Heart right ventricle (tissue), 16 donors: ENCODE measurements at regions of chr12 and their contacts with region 1.

Region 1: DNA sequence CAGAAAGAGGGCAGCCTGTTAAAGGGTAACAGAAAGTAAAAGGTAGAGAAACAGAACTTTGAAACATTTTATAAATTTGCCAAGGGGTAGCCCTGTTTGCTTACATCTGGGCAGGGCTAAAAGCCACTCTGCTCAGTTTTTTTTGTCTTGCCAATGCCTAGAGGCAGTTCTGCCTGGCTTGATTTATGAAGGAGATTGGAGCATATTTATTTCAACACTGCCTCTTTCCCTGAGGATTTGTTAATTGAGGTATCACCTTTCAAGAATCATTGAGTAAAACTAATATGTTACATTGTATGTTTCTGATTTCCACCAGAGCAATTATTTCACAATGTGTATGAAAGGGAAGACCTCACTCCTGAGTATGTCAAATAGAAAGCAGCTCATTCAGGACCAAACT is 160.8 kb downstream of the GXYLT1 start:
- DNase-seq: no peak
- ATAC-seq: no peak
- H3K4me3 ChIP-seq: no peak overlapping the region
- H3K27ac ChIP-seq: no peak overlapping the region
- H3K4me1 ChIP-seq: no peaks in the 10 kb centered on the region
- H3K27me3 ChIP-seq: peaks cover 0 to 3% (median 0%) of the 10 kb centered on the region in 7 donors
- CTCF ChIP-seq: no peak

Region 2: DNA sequence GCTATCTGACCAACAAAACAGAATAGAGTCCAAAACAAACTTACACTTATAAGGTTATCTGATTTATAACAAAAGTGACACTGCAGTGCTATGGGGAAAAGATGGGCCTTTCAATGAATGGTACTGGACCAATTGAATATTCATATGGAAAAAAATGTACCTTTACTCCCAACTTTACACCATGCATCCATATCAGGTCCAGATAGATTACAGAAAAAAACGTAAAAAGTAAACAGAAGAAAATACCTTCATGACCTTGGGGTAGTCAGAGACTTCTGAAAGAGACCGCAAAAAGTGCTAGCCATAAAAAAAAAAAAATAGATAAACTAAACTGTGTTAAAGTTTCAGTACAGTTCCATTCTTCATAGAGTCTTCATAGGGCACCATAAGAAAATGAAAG is 147.4 kb before region 1 on chr12:
- intact Hi-C with region 1: no loop called
- DNase-seq: no peak
- ATAC-seq: no peak
- H3K4me3 ChIP-seq: no peak overlapping the region
- H3K27ac ChIP-seq: no peak overlapping the region
- H3K4me1 ChIP-seq: no peaks in the 10 kb centered on the region
- H3K27me3 ChIP-seq: no peaks in the 10 kb centered on the region
- CTCF ChIP-seq: no peak

Region 3: DNA sequence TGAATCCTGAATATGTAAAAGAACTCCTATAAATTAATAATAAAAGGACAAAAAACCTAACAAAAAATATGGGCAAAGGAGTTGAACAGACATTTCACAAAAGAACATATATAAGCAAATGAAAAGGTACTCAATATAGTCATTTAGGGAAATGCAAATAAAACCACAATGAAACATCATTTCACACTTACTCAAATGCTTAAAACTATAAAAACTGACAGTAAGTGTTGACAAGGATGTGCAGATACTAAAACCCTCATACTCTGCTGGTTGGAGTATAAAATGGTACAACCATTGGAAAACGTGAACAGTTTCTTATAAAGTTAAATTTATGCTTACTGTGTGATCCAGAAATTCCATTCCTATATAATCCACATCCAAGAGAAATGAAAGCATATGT is 86.3 kb before region 1 on chr12:
- intact Hi-C with region 1: no loop called
- DNase-seq: no peak
- ATAC-seq: no peak
- H3K4me3 ChIP-seq: no peak overlapping the region
- H3K27ac ChIP-seq: no peak overlapping the region
- H3K4me1 ChIP-seq: peaks cover 0 to 2% (median 0%) of the 10 kb centered on the region in 9 donors
- H3K27me3 ChIP-seq: no peaks in the 10 kb centered on the region
- CTCF ChIP-seq: no peak

Region 4: GRCh38 chr12:42030588-42030987 is 46.7 kb after region 1 on chr12:
- intact Hi-C with region 1: loop called in 1 of 10 experiments (anchors 2 kb)
- DNase-seq: no peak
- ATAC-seq: no peak
- H3K4me3 ChIP-seq: no peak overlapping the region
- H3K27ac ChIP-seq: no peak overlapping the region
- H3K4me1 ChIP-seq: no peaks in the 10 kb centered on the region
- H3K27me3 ChIP-seq: no peaks in the 10 kb centered on the region
- CTCF ChIP-seq: no peak